CD4-positive, alpha-beta memory T cell (primary cell): ENCODE measurements at regions of chr12 and their contacts with region 1.

Region 1: GRCh38 chr12:101830367-101831325 is at the start of gene GNPTAB:
- DNase-seq: peak; percentile 94 to 98 (median 95)
- H3K4me3 ChIP-seq: peak within 1 kb of the TSS; percentile 40 to 83
- H3K4me3 Mint-ChIP-seq: peak within 1 kb of the TSS; percentile 95 to 99 (median 97)
- H3K27ac ChIP-seq: peak within 1 kb of the TSS; percentile 57
- H3K27ac Mint-ChIP-seq: peak within 1 kb of the TSS; percentile 90 to 97 (median 95)
- H3K4me1 ChIP-seq: peaks cover 32% of the 10 kb centered on the region
- H3K4me1 Mint-ChIP-seq: peaks cover 20 to 46% (median 34%) of the 10 kb centered on the region in 4 donors
- H3K27me3 ChIP-seq: no peaks in the 10 kb centered on the region
- H3K27me3 Mint-ChIP-seq: no peaks in the 10 kb centered on the region
- total RNA-seq, gene GNPTAB: 37.2 to 42.8 TPM

Region 2: DNA sequence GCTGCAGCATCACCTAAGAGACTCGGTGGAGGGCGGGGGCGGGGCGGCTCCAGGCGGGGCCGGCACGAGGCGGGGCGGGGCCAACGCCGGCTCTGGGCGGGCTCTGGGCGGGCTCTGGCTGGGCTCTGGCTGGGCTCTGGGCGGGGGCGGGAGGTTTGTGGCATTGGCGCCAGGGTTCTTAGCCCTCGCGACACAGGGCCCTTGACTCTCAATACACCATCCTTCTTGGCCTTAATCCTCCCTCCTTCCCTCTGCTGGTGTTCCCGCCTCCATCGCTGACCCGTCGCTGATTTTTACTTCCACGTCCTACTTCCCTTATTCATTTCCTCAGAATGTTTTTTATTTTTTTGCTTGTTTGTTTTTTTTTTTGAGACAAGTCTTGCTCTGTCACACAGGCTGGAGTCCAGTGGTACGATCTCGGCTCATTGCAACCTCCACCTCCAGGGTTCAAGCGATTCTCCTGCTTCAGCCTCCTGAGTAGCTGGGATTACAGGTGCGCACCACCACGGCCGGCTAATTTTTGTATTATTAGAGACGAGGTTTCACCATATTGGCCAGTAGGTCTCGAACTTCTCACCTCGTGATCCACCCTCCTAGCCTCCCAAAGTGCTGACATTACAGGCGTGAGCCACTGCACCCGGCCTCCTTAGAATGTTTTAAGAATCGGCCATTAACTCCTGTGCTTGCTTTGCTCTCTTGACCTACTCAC is 1687.6 kb before region 1 on chr12 and contains the start of gene BLTP3B:
- CTCF ChIA-PET with region 1: no interaction called
- POLR2A ChIA-PET with region 1: no interaction called
- intact Hi-C with region 1: loop called (anchors 5 kb)
- DNase-seq: peak; percentile 81 to 88 (median 85)
- H3K4me3 ChIP-seq: peak within 1 kb of the TSS; percentile 66 to 85
- H3K4me3 Mint-ChIP-seq: peak within 1 kb of the TSS; percentile 89 to 98 (median 96)
- H3K27ac ChIP-seq: peak within 1 kb of the TSS; percentile 85
- H3K27ac Mint-ChIP-seq: peak within 1 kb of the TSS; percentile 90 to 97 (median 97)
- H3K4me1 ChIP-seq: peaks cover 22% of the 10 kb centered on the region
- H3K4me1 Mint-ChIP-seq: peaks cover 28 to 42% (median 34%) of the 10 kb centered on the region in 4 donors
- H3K27me3 ChIP-seq: no peaks in the 10 kb centered on the region
- H3K27me3 Mint-ChIP-seq: no peaks in the 10 kb centered on the region
- total RNA-seq, gene BLTP3B: 16.2 to 16.8 TPM

Region 3: DNA sequence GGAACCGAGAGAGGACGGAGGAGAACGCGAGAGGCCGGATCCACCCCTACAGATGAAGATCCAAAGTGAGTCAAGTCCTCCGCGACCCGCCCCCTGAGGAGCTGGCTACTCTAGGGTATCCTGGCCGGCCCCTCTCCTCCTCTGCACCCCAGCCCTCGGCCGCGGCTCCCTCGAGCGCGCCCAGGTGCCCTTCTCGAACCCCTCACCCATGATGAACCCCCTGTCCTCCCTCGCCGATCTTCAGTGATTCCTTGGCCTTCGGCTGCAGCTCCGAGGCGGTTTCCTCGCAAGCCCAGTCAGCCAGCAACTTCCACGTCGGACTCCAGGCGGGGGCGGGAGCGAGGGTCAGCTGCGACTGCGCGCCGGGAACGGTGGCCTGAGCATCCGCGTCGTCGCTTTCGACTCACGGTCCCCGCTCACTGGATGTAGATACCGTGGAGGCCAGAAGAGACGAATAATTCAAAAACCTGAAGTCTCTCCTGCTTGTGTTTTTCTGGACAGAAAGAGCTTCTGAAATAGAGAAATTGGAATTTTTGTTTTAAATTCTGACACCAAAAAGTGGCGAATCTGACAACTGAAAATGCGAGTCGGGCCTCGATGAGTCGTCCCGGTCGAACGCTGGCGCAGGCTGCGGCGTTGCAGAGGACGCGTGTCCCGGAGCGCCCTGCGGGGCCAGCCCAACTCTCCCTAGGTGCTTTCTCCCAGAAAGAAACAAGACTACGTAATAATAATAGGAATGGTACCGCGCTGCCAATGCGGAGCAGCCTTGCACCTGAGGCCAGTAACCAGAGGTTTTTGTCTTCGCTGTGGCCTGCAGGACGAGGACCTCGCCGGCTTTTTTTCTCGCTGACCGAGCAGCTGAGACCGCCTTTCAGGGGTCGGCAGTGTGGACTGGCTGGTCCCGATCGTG is 423.0 kb before region 1 on chr12 and contains the start of gene ARL1:
- CTCF ChIA-PET with region 1: interaction called, 3 read pairs
- POLR2A ChIA-PET with region 1: interaction called, 11 read pairs
- intact Hi-C with region 1: no loop called
- DNase-seq: peak; percentile 57 to 75 (median 68)
- H3K4me3 ChIP-seq: peak within 1 kb of the TSS; percentile 94 to 97
- H3K4me3 Mint-ChIP-seq: peak within 1 kb of the TSS; percentile 90 to 99 (median 96)
- H3K27ac ChIP-seq: peak within 1 kb of the TSS; percentile 71
- H3K27ac Mint-ChIP-seq: peak within 1 kb of the TSS; percentile 93 to 97 (median 96)
- H3K4me1 ChIP-seq: peaks cover 25% of the 10 kb centered on the region
- H3K4me1 Mint-ChIP-seq: peaks cover 16 to 40% (median 23%) of the 10 kb centered on the region in 4 donors
- H3K27me3 ChIP-seq: no peaks in the 10 kb centered on the region
- H3K27me3 Mint-ChIP-seq: no peaks in the 10 kb centered on the region
- total RNA-seq, gene ARL1: 37.9 to 41.0 TPM

Region 4: GRCh38 chr12:101697197-101697929 is 133.3 kb before region 1 on chr12 and contains the start of gene CHPT1:
- CTCF ChIA-PET with region 1: interaction called, 3 read pairs
- POLR2A ChIA-PET with region 1: interaction called, 3 read pairs
- intact Hi-C with region 1: loop called (anchors 2 kb)
- DNase-seq: peak; percentile 45 to 73 (median 59)
- H3K4me3 ChIP-seq: peak within 1 kb of the TSS; percentile 68 to 76
- H3K4me3 Mint-ChIP-seq: peak within 1 kb of the TSS; percentile 91 to 96 (median 94)
- H3K27ac ChIP-seq: peak within 1 kb of the TSS; percentile 53
- H3K27ac Mint-ChIP-seq: peak within 1 kb of the TSS; percentile 73 to 93 (median 87)
- H3K4me1 ChIP-seq: peaks cover 22% of the 10 kb centered on the region
- H3K4me1 Mint-ChIP-seq: peaks cover 28 to 54% (median 37%) of the 10 kb centered on the region in 4 donors
- H3K27me3 ChIP-seq: no peaks in the 10 kb centered on the region
- H3K27me3 Mint-ChIP-seq: no peaks in the 10 kb centered on the region
- total RNA-seq, gene CHPT1: 17.7 to 19.1 TPM

Region 5: DNA sequence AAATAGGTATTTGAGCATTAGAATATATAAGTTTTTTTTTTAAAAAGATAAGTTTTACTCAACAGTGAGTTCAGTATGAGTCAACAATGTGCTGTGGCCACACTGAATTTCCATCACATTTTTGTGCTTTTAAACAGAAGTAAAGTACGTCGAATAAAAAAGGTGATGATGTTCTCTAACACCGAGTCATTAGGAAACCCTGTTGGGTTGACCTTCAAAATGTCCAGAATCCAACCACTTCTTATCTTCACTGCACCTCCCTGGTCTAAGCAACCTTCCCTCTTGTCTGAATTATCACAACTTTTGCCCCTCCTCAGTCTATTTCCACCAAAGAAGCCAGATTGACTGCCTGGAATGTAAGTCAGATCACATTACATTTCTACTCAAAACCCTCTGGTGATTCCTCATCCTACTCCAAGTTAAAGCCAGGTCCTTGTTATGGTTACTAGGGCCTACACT is 48.3 kb before region 1 on chr12:
- CTCF ChIA-PET with region 1: interaction called, 13 read pairs
- POLR2A ChIA-PET with region 1: interaction called, 10 read pairs
- intact Hi-C with region 1: no loop called
- DNase-seq: no peak
- H3K4me3 ChIP-seq: no peak overlapping the region
- H3K4me3 Mint-ChIP-seq: no peak overlapping the region
- H3K27ac ChIP-seq: no peak overlapping the region
- H3K27ac Mint-ChIP-seq: peak overlapping the region in 4 of 7 donors; percentile 14 to 58 (median 29)
- H3K4me1 ChIP-seq: no peaks in the 10 kb centered on the region
- H3K4me1 Mint-ChIP-seq: peaks cover 0 to 6% (median 1%) of the 10 kb centered on the region in 4 donors
- H3K27me3 ChIP-seq: no peaks in the 10 kb centered on the region
- H3K27me3 Mint-ChIP-seq: no peaks in the 10 kb centered on the region

Region 6: DNA sequence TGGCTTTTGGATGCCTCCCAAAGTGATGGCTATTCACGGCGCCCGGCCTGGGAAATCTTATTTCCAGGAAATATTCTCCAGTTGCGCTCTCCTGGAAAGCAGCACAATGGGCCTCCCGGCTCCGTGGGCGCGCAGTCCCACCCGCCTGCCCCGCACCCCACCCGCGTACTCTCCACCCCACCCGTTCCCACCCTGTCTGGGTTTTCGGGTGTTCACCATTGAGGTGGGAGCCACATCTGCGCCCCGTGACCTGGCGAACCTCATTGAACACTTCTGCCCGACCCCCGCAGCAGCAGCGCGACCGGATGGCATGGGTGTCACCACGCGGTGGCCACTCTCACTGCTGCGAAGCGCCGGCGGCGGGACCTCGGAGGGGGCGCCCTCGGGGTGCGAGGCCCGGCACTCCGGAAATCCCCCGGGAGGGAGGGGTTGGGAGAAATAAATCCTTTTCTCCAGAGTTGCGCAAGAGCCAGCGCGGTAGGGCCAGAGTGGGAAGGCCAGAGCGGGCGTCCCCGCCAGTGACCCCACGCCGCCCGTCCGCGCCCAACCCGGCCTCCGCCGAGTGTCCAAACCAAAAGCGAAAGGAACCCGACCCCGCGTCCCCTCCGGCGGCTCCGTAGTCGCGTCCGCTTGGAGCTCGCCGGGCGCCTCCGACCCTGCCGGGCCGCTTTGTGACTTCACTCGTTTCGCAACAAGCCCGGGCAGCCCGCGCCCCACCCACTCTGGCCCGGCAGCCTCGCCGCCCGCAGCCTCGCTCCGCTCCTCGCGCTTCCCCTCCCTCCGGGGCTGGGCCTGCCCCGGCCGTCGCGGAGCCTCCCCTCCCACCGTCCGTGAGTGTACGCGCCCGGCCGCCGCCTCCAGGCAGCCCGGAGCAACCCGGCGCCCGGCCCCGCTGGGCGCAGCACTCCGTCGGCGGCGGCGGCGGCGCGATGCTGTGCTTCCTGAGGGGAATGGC is 46.5 kb after region 1 on chr12 and contains the start of gene DRAM1:
- CTCF ChIA-PET with region 1: interaction called, 5 read pairs
- POLR2A ChIA-PET with region 1: interaction called, 8 read pairs
- intact Hi-C with region 1: loop called (anchors 2 kb)
- DNase-seq: peak; percentile 66 to 74 (median 69)
- H3K4me3 ChIP-seq: peak within 1 kb of the TSS; percentile 58 to 60
- H3K4me3 Mint-ChIP-seq: peak within 1 kb of the TSS; percentile 83 to 95 (median 90)
- H3K27ac ChIP-seq: peak within 1 kb of the TSS; percentile 78
- H3K27ac Mint-ChIP-seq: peak within 1 kb of the TSS; percentile 79 to 93 (median 89)
- H3K4me1 ChIP-seq: peaks cover 14% of the 10 kb centered on the region
- H3K4me1 Mint-ChIP-seq: peaks cover 7 to 13% (median 13%) of the 10 kb centered on the region in 4 donors
- H3K27me3 ChIP-seq: no peaks in the 10 kb centered on the region
- H3K27me3 Mint-ChIP-seq: no peaks in the 10 kb centered on the region
- total RNA-seq, gene DRAM1: 2.3 to 2.7 TPM